ENCODE measurements at regions of chr4 and their contacts with region 1.

Region 1: GRCh38 chr4:1356181-1356998 is 9.4 kb downstream of the UVSSA start:
- DNase-seq: no peak
- H3K4me3 ChIP-seq: no peak overlapping the region
- H3K27ac ChIP-seq: no peak overlapping the region
- H3K27me3 ChIP-seq: no peaks in the 10 kb centered on the region
- CTCF ChIP-seq: peak; percentile 84

Region 2: DNA sequence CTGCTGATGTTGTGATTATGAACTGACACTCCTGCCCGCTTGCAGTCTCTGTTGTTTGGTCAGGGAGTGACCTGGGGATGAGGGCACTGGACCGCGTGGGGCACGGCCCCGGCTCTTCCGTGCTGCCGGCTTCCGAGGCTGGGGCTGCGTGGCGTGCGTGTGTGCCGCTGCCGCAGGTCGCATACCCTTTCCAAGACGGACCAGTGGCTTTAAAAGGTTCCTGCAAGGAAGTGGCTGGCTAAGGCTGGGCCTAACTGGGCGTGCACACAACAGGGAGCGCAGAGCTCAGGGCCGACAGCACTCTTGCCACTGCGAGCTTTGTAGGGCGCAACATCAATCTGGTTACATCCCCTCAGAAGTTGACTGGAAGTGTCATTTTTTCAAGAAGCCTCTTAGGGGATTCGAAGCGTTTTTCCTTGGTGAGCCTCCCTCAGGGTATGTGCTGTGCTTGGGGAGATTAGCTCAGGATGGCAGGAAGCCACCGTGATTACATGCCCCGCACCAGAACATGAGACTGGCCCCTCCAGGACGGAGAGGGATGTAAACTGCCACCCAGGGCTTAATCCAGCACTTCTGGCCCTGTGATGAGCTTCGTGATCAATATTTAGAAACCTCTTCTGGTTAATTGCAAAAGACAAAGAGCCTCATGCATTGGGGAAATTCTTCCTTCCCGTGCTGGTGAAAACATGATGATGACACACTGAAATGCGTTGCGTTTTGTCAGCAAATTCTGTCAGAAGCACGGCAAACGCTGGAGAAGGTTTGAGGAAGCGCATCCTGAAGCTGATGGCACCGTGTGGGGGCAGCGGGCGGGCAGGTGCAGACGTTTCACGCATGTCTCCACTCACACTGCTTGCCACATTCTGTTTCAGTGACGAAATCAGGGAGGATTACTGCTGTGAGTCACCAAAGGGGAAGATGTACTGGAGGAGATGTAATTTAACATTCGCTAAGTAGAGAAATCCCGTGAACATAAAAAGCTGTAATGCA is 55.6 kb before region 1 on chr4:
- CTCF ChIA-PET with region 1: no interaction called
- POLR2A ChIA-PET with region 1: no interaction called
- DNase-seq: no peak
- H3K4me3 ChIP-seq: no peak overlapping the region
- H3K27ac ChIP-seq: peak overlapping the region; percentile 31
- H3K27me3 ChIP-seq: no peaks in the 10 kb centered on the region
- CTCF ChIP-seq: no peak

Region 3: DNA sequence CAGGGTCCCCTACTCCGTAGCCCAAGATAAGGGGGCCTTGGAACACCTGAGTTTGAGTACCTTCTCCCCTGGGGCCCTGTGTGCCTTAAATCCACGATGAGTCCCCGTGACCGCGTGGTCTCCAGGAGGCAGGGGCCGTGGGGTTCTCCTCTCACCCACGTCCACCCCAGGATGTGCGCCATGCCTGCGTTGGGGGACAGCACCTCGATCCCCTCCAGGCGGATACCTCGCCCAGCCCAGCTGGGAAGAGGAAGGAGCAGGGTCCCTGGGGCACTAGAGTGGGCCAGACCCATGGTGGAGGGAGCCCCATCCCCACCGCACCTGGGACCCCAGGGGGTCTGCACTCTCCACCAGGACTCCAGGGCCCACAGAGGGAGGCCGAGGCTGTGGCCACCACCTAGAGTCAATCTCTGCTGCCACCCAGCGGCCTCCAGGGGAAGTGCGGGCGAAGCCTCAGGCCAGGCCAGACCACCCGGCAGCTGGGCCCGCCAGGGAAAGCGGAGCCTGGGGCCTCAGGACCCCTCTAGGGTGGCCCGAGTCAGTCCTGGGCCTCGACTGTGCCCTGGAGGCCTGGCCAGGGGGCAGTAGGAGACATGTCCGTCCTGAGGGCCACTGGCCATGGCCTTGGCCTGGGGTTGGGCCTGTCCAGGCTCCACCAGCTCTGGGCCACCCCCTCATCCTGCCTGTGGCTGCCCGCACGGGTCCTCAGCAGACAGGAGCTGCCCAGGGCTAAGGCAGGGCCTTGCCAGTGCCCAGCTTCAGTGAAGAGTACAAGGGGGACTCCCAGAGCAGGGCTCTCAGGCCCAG is 272.7 kb after region 1 on chr4:
- CTCF ChIA-PET with region 1: interaction called, 14 read pairs
- POLR2A ChIA-PET with region 1: no interaction called
- DNase-seq: no peak
- H3K4me3 ChIP-seq: no peak overlapping the region
- H3K27ac ChIP-seq: no peak overlapping the region
- H3K27me3 ChIP-seq: peaks cover 9% of the 10 kb centered on the region
- CTCF ChIP-seq: peak; percentile 77

Measured in AG04450 (cell line).